ENCODE measurements at regions of chrX and their contacts with region 1.

Region 1: GRCh38 chrX:19343535-19344408 is at the start of gene PDHA1:
- DNase-seq: peak; percentile 73 to 94 (median 91)
- ATAC-seq: peak; percentile 99
- H3K4me3 ChIP-seq: peak within 1 kb of the TSS; percentile 71
- H3K4me3 Mint-ChIP-seq: peak within 1 kb of the TSS; percentile 79 to 90 (median 87)
- H3K27ac ChIP-seq: peak within 1 kb of the TSS; percentile 86
- H3K27ac Mint-ChIP-seq: peak within 1 kb of the TSS; percentile 82 to 95 (median 89)
- H3K4me1 ChIP-seq: peaks cover 6 to 9% of the 10 kb centered on the region in 2 donors
- H3K4me1 Mint-ChIP-seq: peaks cover 0 to 28% (median 14%) of the 10 kb centered on the region in 7 donors
- H3K27me3 ChIP-seq: no peaks in the 10 kb centered on the region
- H3K27me3 Mint-ChIP-seq: no peaks in the 10 kb centered on the region
- total RNA-seq, gene PDHA1: 113 to 123 (median 119) TPM

Region 2: GRCh38 chrX:18886344-18887161 is 457.2 kb before region 1 on chrX:
- CTCF ChIA-PET with region 1: no interaction called
- POLR2A ChIA-PET with region 1: no interaction called
- intact Hi-C with region 1: loop called in 1 of 2 experiments (anchors 2 kb)
- DNase-seq: peak; percentile 10 to 47 (median 40)
- ATAC-seq: peak; percentile 79
- H3K4me3 ChIP-seq: peak overlapping the region; percentile 56
- H3K4me3 Mint-ChIP-seq: peak overlapping the region; percentile 84 to 97 (median 90)
- H3K27ac ChIP-seq: peak overlapping the region; percentile 57
- H3K27ac Mint-ChIP-seq: peak overlapping the region; percentile 71 to 95 (median 90)
- H3K4me1 ChIP-seq: peaks cover 6 to 23% of the 10 kb centered on the region in 2 donors
- H3K4me1 Mint-ChIP-seq: peaks cover 11 to 47% (median 37%) of the 10 kb centered on the region in 7 donors
- H3K27me3 ChIP-seq: no peaks in the 10 kb centered on the region
- H3K27me3 Mint-ChIP-seq: no peaks in the 10 kb centered on the region

Region 3: DNA sequence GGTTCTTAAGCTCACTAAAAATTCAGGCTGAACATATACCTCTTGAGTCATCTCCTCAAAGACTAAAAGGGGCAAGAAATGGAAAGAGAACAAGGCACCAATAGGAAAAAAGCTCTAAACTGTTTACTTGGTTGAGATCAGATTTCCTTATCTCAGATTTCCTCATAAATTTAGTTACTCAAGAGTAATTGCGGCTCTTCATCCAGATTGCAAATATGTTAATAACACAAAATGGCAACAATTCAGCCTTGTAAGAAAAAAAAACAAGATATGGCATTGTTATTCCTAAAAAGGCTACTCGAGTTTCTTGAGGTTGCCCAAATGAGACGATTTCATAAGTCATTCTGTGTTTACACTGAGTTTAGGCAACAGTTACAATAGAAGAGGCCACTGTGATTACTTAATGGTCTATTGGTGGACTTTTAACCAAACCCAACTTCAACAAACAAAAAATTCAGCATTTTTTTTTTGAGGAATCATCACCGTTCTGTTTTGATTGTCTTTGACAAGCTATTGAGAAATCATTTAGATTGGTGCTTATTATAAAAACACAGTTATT is 98.0 kb before region 1 on chrX:
- CTCF ChIA-PET with region 1: no interaction called
- POLR2A ChIA-PET with region 1: no interaction called
- intact Hi-C with region 1: no loop called
- DNase-seq: no peak
- ATAC-seq: no peak
- H3K4me3 ChIP-seq: no peak overlapping the region
- H3K4me3 Mint-ChIP-seq: no peak overlapping the region
- H3K27ac ChIP-seq: no peak overlapping the region
- H3K27ac Mint-ChIP-seq: no peak overlapping the region
- H3K4me1 ChIP-seq: no peaks in the 10 kb centered on the region
- H3K4me1 Mint-ChIP-seq: no peaks in the 10 kb centered on the region
- H3K27me3 ChIP-seq: no peaks in the 10 kb centered on the region
- H3K27me3 Mint-ChIP-seq: peaks cover 0 to 7% (median 0%) of the 10 kb centered on the region in 5 donors

Region 4: GRCh38 chrX:19270727-19271126 is 73.0 kb before region 1 on chrX:
- CTCF ChIA-PET with region 1: no interaction called
- POLR2A ChIA-PET with region 1: no interaction called
- intact Hi-C with region 1: no loop called
- DNase-seq: no peak
- ATAC-seq: no peak
- H3K4me3 ChIP-seq: no peak overlapping the region
- H3K4me3 Mint-ChIP-seq: no peak overlapping the region
- H3K27ac ChIP-seq: no peak overlapping the region
- H3K27ac Mint-ChIP-seq: no peak overlapping the region
- H3K4me1 ChIP-seq: no peaks in the 10 kb centered on the region
- H3K4me1 Mint-ChIP-seq: no peaks in the 10 kb centered on the region
- H3K27me3 ChIP-seq: no peaks in the 10 kb centered on the region
- H3K27me3 Mint-ChIP-seq: peaks cover 0 to 7% (median 0%) of the 10 kb centered on the region in 5 donors

Region 5: DNA sequence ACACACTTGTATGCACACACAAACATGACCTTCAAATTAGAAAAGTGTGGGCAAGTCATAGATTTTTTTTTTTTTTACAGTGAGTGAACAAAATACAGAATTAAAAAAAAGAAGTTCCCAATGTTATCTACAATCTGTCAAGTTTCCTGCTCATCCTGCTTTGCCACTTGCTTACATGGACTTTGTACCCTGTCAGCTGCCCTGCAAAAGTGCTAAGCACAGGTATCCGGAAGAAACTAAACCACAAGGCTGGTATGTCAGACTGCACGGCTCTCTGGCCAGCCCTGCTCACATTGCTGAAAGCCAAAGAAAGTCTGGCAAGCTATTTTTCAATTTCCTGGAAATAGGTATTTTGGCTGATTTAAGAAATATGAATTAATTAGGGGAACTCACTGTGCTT is 686.0 kb after region 1 on chrX:
- CTCF ChIA-PET with region 1: no interaction called
- POLR2A ChIA-PET with region 1: no interaction called
- intact Hi-C with region 1: no loop called
- DNase-seq: no peak
- ATAC-seq: no peak
- H3K4me3 ChIP-seq: no peak overlapping the region
- H3K4me3 Mint-ChIP-seq: no peak overlapping the region
- H3K27ac ChIP-seq: no peak overlapping the region
- H3K27ac Mint-ChIP-seq: peak overlapping the region in 2 of 9 donors; percentile 24 to 25
- H3K4me1 ChIP-seq: peaks cover 0 to 13% of the 10 kb centered on the region in 2 donors
- H3K4me1 Mint-ChIP-seq: peaks cover 0 to 21% (median 10%) of the 10 kb centered on the region in 7 donors
- H3K27me3 ChIP-seq: no peaks in the 10 kb centered on the region
- H3K27me3 Mint-ChIP-seq: no peaks in the 10 kb centered on the region

Region 6: GRCh38 chrX:20141281-20142220 is 797.8 kb after region 1 on chrX and contains the start of gene EIF1AX:
- CTCF ChIA-PET with region 1: no interaction called
- POLR2A ChIA-PET with region 1: no interaction called
- intact Hi-C with region 1: loop called in 1 of 2 experiments (anchors 5 kb)
- DNase-seq: peak; percentile 82 to 100 (median 98)
- ATAC-seq: peak; percentile 99
- H3K4me3 ChIP-seq: peak within 1 kb of the TSS; percentile 84
- H3K4me3 Mint-ChIP-seq: peak within 1 kb of the TSS; percentile 80 to 96 (median 88)
- H3K27ac ChIP-seq: peak within 1 kb of the TSS; percentile 93
- H3K27ac Mint-ChIP-seq: peak within 1 kb of the TSS; percentile 68 to 97 (median 89)
- H3K4me1 ChIP-seq: peaks cover 8 to 13% of the 10 kb centered on the region in 2 donors
- H3K4me1 Mint-ChIP-seq: peaks cover 4 to 42% (median 27%) of the 10 kb centered on the region in 7 donors
- H3K27me3 ChIP-seq: no peaks in the 10 kb centered on the region
- H3K27me3 Mint-ChIP-seq: no peaks in the 10 kb centered on the region
- total RNA-seq, gene EIF1AX: 40.2 to 67.5 (median 51.6) TPM

Measured in naive thymus-derived CD4-positive, alpha-beta T cell (primary cell).